ENCODE measurements at regions of chrX and their contacts with region 1.

Region 1: DNA sequence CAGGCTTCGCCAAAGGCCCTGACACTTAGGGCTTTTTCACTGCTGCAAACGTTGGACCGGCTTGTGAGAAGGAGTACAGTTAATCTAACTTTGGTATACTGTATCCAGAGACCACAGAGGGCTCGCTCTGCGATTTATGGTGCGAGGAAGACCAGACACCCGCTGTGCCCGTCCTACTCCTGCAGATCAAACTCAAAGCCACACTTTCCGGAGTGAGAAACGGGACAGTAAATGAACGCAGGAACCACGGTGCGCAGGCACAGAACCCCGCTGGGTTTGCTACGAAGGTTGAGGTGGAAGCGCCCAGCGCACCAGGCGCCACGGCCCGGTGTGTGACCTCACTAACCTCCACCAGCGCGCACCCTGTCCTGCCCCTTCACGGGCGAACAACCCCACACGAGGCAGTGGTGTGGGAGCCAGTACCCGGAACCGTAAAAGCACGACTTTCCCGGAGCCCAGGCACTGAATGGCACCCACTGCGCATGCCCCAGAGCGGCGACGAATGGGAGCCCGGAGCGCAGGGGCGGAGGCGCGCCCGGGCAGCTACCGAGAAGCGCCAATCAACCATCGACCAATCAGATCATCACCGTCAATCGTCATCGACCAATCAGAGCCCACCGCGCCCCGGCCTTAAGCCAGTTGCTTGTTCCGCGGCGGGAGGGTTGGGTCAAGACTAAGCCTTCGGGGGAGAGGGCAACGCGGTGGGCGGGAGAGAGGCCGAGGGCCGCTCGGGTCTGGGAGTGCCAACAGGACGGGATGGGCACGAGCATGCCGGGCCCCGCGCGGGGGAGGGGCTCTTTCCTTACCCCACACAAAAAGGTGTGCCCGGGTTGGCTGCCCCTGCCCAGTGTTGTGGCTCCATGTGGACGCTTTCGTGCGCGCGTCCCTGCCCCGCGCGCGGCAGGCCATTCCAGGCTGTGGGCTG is 21.3 kb upstream of the WDR45 start:
- DNase-seq: peak; percentile 87
- H3K4me3 Mint-ChIP-seq: peak overlapping the region; percentile 89
- H3K27ac Mint-ChIP-seq: peak overlapping the region; percentile 84
- H3K4me1 Mint-ChIP-seq: peaks cover 4% of the 10 kb centered on the region
- H3K27me3 Mint-ChIP-seq: no peaks in the 10 kb centered on the region

Region 2: DNA sequence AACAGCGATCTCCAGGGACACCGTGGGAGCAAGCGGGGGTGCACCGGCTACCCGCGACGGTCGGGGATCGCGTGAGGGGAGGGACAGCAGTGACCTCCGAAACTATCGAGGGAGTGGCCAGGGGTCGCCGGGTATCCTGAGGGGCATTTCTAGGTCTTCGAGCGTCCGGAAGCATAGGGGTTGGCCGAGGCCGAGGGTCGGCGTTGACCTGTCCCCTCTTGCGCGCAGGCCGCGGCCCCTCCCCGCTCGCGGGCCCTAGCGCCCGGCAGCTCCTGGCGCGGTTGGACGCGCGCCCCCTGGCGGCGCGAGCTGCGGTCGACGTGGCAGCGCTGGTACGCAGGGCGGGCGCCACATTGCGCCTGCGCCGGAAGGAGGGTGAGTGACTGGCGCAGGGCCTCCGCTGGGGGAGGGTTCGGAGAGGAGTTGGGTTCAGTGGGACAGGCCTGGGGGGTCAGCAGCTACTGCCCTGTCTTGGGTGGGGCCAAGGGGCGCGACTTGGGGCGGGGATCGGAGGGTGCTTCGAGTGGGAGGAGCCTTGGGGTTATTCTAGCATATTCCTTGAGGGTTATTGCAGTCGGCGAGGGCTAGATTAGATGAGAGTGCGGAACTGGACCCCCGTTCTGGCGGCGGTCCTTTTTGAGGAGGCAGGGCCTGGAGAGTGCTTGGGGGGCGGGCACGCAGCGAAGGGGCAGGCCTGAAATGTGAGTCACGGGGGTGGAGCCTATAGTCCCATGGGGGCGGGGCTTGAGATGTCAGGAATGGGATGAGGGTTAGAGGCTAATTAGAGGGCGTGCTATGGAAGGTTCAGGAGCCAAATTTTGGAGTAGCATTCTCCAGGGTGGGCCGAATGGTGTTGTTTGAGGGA is 62.8 kb after region 1 on chrX:
- intact Hi-C with region 1: loop called (anchors 10 kb)
- DNase-seq: peak; percentile 80
- H3K4me3 Mint-ChIP-seq: peak overlapping the region; percentile 76
- H3K27ac Mint-ChIP-seq: peak overlapping the region; percentile 91
- H3K4me1 Mint-ChIP-seq: peaks cover 24% of the 10 kb centered on the region
- H3K27me3 Mint-ChIP-seq: no peaks in the 10 kb centered on the region